ENCODE measurements at regions of chr14 and their contacts with region 1.

Region 1: GRCh38 chr14:20682435-20683124 is 1.8 kb upstream of the RNASE4 start:
- DNase-seq: peak; percentile 84 to 98 (median 89)

Region 2: DNA sequence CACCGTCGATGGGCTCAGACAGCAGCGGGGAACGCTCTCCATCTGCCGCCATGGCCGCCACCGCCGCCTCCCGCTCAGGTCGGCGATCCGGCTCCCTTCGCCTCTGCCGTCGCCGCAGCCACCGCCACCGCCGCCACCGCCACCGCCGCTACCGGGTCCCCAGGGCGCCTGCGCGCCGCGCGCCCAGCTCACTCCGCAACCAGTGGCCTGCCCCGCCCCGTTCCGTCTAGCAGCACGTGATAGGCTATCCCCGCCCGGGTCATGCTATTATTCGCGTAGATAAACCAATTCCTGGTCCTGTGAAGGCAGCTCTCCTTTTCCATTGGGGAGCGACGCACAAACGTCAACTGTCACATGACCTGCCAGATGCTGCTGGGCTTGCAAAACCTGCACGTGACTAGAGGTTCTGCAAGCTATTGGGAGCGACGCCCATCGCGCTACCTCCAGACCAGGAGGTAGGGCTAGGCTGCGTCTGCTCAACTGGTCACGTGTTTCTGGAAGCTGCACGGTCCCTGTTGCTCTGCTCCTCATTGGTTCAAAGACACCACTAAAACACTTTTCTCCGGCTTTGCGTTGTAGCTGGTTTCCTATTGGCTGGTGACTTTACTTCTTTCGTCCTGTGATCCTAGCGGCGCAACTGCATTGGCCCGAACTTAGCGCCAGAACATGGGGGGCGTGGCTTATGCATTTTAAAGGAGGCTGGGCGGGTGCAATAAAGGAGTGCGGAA is 221.1 kb before region 1 on chr14 and contains the start of gene PIP4P1:
- intact Hi-C with region 1: loop called (anchors 5 kb)
- DNase-seq: peak; percentile 98 to 100 (median 99)

Region 3: DNA sequence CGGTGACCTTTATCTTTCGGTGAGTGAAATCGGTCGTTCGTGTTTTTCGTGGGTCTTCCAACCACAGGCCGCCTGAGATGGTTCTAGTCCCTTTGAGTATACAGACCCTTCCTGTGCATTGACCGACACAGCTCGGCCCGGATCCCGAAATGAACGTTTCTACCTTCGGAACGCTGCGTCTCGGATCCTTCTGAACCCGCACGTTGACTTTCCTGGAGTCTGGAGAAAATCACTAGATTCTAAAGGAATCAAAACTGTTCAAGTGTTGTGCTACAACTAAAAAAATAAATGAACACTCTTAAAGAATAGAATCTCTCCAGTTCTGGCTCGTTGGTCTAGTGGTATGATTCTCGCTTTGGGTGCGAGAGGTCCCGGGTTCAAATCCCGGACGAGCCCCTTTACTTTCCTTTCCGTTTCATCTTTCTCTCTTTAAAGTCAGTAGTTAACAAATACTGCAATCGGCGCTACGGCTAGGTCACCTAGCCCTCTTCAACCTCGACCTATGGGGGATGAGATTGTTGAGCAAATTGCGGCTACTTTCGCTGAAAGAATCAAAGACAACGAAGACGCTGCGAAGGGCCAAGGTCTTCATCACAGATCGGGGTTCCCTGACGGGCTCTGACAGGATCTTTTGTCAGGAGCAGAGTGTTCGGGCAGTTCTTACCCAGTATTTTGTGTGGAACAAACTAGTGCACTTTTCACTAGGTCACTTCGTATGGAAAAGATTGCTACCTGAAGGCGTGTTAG is 49.7 kb before region 1 on chr14:
- intact Hi-C with region 1: loop called (anchors 5 kb)
- DNase-seq: peak in 3 of 10 donors; percentile 27 to 85 (median 39)

Measured in posterior cingulate gyrus (tissue), 11 donors.